Prostate gland (tissue), 2 donors: ENCODE measurements at regions of chr11 and their contacts with region 1.

Region 1: DNA sequence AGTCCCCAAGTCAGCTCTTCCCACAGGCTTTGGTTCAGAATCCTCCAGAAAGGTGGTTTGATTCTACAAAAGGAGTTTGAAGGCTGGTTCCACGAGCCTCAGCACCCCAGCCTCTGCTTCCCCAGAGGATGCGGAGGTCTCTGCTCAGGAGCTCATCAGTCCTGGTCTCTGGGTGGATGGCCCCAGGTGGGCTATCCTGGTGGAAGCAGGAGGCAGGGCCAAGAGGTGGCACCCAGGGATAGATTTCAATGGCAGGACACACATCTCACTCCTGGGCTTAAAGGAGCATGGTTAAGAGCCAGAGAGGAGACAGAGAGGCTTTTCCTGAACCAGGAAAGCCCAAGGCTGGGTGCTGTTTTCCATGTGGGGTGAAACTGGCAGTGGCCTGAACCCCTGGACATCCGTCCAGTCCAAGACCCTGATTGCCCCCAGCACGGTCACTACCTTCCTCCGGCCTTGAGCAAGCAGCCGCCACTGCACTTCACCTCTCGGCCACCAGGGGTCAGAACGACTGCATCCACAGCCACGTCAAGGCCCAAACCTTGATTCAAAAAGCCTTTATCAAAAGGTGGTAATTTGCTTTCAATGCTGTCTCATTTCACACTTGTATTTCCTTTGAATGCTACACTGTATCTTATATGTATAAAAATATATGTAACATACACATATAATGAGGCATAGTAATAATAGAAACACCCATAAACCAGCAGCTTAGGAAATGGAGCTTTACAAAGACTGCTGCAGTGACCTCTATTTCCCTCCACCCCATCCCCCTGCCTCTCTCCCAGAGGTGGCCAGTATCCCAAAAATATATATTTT is 19.3 kb upstream of the FXYD2 start:
- DNase-seq: peak; percentile 68
- H3K4me3 ChIP-seq: no peak overlapping the region
- H3K27ac ChIP-seq: no peak overlapping the region
- H3K4me1 ChIP-seq: no peaks in the 10 kb centered on the region
- H3K27me3 ChIP-seq: no peaks in the 10 kb centered on the region
- CTCF ChIP-seq: peak; percentile 95 to 99 (median 98)
- POLR2A ChIP-seq: no peak

Region 2: DNA sequence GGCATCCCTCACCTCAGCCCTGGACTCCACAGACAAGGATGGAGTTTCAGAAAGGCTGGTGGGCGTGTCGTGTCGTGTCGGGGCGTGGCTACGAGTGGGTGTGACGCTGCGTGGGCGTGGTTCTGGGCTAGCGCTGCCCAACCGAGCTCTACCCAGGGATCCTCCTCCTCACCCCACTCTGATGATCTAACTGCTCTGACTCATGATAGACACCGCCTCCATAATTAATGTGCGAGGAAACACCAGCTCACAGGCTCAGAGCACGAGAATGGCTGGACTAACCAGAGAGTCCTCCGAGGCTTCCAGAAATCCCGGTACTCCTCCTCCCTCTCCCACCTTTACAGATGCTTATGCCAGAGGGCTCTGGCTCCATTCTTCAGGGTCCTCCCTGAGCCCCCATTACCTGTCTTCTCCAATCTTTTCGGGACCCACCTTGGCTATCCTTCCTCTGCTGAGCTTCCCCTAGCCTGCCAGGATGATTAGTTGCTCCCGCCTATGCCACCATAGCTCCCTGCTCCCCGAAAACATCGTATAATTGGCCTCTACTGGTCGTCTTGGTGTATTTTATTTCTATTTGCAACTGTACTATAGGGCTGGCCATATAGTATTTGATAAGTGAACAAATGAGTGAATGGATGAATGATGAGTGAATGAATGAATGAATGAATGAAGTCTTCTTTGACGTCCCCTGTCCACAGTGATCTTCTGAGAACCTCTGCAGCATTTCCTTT is 63.5 kb after region 1 on chr11:
- intact Hi-C with region 1: loop called (anchors 5 kb)
- DNase-seq: peak; percentile 51
- H3K4me3 ChIP-seq: no peak overlapping the region
- H3K27ac ChIP-seq: no peak overlapping the region
- H3K4me1 ChIP-seq: no peaks in the 10 kb centered on the region
- H3K27me3 ChIP-seq: no peaks in the 10 kb centered on the region
- CTCF ChIP-seq: no peak
- POLR2A ChIP-seq: peak; percentile 17

Region 3: GRCh38 chr11:118051611-118052461 is 208.0 kb after region 1 on chr11:
- intact Hi-C with region 1: loop called (anchors 10 kb)
- DNase-seq: no peak
- H3K4me3 ChIP-seq: no peak overlapping the region
- H3K27ac ChIP-seq: no peak overlapping the region
- H3K4me1 ChIP-seq: no peaks in the 10 kb centered on the region
- H3K27me3 ChIP-seq: no peaks in the 10 kb centered on the region
- CTCF ChIP-seq: no peak
- POLR2A ChIP-seq: no peak

Region 4: GRCh38 chr11:118449316-118449918 is 605.5 kb after region 1 on chr11:
- intact Hi-C with region 1: no loop called
- DNase-seq: no peak
- H3K4me3 ChIP-seq: no peak overlapping the region
- H3K27ac ChIP-seq: no peak overlapping the region
- H3K4me1 ChIP-seq: no peaks in the 10 kb centered on the region
- H3K27me3 ChIP-seq: no peaks in the 10 kb centered on the region
- CTCF ChIP-seq: no peak
- POLR2A ChIP-seq: no peak